ENCODE measurements at regions of chr10 and their contacts with region 1.

Region 1: DNA sequence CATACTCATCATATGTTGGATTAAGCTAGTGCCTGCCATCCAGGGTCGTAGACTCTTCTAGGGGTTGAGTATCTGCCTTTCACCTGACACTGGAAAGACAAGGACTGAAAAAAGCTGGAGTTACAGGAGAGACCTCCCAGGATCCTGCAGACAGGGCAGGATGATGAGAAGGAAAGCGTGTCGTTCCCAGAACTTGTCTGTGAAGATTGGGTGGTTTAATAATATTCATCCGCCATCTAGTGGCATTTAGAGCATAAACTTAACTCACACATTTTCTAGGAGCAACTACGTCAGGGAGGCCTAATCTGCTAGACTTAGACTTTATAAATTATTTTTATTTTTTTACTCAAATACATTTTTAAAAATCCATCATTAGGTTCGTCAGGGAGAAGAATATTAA is 59.6 kb downstream of the ADRB1 start:
- DNase-seq: no peak
- H3K4me3 ChIP-seq: no peak overlapping the region
- CTCF ChIP-seq: no peak
- POLR2A ChIP-seq: no peak

Region 2: DNA sequence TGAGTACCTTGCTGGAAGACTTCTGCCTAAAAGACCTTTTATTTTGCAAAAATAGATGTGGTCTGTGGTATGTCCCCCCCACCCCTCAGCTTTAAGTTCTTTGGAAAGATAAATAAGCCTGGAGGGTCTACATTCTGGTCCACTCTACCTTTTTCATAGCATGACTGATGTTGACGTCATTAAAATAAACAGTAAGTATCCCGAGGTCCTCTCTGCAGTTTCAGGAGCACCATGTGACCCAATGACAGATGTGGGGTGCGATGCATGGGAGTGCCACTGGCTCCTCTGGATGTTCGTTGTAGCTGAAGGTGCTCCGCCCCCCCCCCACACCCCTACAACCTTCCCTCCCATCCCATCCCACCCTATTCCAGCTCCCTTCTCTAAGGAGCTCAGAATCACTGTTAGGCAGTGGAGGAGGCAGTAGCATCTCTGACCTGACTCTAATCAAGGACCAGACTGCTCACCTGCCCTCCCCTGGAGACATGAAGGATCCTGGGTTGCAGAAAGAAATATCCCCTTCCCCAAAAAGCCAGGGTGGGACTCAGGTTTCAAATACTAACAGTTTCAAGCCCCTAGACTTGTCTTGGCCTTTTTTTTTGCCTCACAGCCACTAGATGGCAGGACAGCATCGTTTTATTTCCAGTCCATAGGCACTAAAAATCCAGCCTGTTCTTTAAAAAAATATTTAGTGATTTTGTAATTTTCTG is 398.5 kb before region 1 on chr10:
- intact Hi-C with region 1: loop called (anchors 5 kb)
- DNase-seq: no peak
- H3K4me3 ChIP-seq: no peak overlapping the region
- CTCF ChIP-seq: no peak
- POLR2A ChIP-seq: no peak

Region 3: GRCh38 chr10:113802997-113803396 is 300.3 kb before region 1 on chr10:
- intact Hi-C with region 1: loop called (anchors 5 kb)
- DNase-seq: no peak
- H3K4me3 ChIP-seq: no peak overlapping the region
- CTCF ChIP-seq: no peak
- POLR2A ChIP-seq: no peak

Region 4: DNA sequence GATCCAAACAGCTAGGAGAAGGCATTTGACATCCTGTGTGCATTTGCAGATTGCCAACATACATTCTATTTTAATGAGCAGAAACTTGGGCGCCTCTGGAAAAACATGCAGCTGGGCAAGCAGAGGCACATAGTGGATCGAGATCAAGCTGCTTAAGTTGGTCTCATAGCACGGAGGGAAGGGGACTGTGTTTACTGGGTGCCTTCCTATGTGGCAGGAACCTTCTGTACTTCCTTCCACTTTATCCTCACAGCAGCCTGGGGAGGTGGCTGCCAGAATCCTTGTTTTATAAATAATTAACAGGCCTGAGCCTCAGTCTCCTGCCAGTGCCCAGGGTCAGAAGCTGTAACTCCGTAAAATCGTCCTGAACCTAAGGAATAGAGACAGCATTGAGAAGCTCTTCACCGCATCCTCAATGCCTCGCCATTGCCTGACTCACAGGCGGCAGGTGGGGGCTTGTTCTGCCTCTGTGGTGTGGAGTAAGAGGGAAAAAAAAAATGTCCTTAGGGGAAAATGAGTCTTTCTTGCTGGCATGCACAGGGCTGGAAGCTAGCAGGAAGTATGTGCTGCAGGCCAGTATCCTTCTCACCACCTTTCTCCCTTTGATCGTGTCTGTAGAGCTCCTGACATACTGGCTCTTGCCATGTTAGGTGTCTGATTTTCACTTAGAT is 142.0 kb after region 1 on chr10:
- intact Hi-C with region 1: no loop called
- DNase-seq: peak; percentile 42 to 86
- H3K4me3 ChIP-seq: no peak overlapping the region
- CTCF ChIP-seq: no peak
- POLR2A ChIP-seq: no peak

Measured in lower leg skin (tissue), 4 donors.